Natural killer cell (primary cell): ENCODE measurements at regions of chr6 and their contacts with region 1.

Region 1: DNA sequence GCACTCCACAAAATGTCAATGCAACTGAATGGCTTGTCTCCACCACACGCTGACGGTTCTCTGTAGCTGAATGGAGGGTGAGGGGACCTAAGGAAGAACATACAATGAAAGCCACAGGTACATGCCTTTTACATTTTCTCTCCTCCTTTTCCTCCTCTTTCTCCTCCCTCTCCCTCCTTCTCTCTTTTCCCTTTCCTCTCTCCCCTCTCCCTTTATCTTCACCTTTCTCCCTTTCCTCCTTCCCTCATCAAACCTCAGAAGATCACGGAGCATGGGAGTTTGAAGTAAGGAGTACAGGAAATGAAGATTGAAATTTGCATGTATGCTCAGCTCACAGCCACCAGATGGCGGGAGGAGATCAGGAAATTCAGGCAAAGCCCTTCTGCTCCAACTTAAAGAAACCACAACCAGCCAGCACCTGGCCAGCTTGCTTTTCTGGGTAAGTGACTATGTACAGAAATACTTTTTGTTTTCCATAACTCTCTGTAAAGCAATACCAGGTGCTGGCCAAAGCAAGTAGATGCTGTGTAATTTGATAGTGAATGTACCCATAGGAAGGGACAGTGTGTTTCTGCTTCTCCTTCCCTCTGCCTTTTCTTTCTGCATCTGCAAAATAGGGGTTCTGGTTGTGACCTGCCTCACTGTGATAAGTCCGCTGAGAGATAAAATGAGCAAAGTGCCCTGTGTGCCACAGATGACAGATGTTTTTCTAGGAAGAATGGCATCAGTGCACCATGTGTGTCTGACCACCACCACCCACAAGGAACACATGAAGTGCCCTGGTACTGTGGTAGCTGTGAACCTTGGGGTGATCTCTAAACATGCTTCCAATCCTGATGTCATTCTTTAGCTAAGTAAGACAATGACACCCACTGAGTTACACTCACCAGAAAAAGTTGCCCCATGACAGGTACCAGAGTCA is 18.6 kb upstream of the FOXO3 start:
- DNase-seq: peak; percentile 56 to 90
- ATAC-seq: peak; percentile 77 to 81 (median 81)
- H3K4me3 ChIP-seq: no peak overlapping the region
- H3K4me3 Mint-ChIP-seq: no peak overlapping the region
- H3K27ac ChIP-seq: no peak overlapping the region
- H3K27ac Mint-ChIP-seq: peak overlapping the region in 1 of 2 donors; percentile 41
- H3K4me1 ChIP-seq: peaks cover 13% of the 10 kb centered on the region
- H3K4me1 Mint-ChIP-seq: peaks cover 28 to 41% of the 10 kb centered on the region in 2 donors
- H3K27me3 ChIP-seq: no peaks in the 10 kb centered on the region
- H3K27me3 Mint-ChIP-seq: no peaks in the 10 kb centered on the region
- CTCF ChIP-seq: peak; percentile 95

Region 2: DNA sequence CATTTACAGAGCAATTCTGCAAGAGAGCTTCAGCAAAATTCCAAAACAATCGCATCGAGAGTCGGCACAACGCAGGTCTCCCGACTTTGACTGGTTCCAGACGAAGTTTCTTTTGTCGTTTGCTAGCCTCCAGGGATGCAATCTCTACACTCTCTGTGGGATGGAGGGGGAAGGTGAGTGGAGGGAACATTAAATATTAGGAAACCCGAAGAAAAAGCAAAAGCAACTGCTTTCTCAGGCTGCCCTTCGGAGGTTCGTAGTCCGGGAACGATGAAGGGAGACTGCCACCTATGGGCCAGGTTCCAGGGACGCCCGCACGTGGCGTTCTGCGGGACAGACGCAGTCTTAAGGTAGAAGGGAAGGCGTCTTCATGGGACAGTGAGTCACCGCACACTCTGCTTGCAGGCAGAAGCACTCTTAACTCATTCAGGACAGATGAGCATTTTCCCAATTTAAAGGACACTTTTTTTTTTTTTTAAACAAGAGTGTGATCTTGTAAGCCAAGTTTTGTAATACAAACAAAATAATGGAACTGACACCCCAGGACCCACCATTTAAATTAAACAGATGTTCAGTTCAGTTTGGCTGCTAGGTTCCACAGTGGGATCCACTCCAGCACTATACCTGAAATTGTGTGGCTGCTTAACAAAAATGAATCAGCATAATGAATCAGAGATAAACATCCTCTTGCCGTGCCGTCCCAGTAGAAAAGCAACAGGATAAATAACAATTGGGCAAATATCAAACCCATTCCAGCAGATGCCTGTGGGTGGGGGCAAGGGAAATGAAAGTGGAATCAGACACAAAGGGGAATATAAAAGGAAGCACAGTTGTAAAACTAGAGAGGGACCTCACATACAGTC is 240.3 kb after region 1 on chr6:
- intact Hi-C with region 1: loop called (anchors 1 kb)
- DNase-seq: peak; percentile 59 to 87
- ATAC-seq: peak; percentile 93 to 99 (median 97)
- H3K4me3 ChIP-seq: peak overlapping the region; percentile 39
- H3K4me3 Mint-ChIP-seq: peak overlapping the region; percentile 86
- H3K27ac ChIP-seq: no peak overlapping the region
- H3K27ac Mint-ChIP-seq: peak overlapping the region in 1 of 2 donors; percentile 63
- H3K4me1 ChIP-seq: peaks cover 9% of the 10 kb centered on the region
- H3K4me1 Mint-ChIP-seq: peaks cover 12 to 17% of the 10 kb centered on the region in 2 donors
- H3K27me3 ChIP-seq: no peaks in the 10 kb centered on the region
- H3K27me3 Mint-ChIP-seq: peaks cover 8 to 10% of the 10 kb centered on the region in 2 donors
- CTCF ChIP-seq: peak; percentile 77

Region 3: DNA sequence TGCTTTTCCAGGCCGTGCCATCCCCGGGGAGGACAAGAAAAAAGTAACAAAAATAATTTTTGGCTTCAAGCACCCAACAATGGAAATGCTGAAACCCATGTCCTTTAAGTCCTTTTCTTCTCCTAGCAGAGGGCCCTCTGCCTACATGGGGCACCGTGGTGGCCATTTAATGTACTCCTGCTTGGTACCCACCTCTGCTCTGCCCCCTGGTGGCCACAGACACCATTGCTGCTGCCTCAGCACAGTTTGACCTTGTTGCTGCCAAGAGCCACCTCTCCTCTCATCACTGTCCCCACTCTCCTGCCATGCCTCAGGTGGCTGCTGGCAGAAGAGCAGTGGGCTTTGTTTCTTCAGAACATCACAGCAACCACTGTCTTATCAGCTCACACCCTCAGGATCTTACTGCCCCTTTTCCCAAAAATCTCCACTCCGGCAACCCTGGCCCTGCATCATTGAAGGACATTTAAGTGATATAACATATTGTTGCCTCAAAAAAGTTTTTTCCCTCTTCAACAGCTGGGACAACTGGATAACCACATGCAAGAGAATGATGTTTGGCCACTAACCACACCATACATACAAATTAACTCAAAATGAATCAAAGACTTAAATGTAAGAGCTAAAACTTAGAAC is 293.2 kb after region 1 on chr6:
- intact Hi-C with region 1: loop called (anchors 1 kb)
- DNase-seq: peak; percentile 80 to 92
- ATAC-seq: peak; percentile 77 to 92 (median 78)
- H3K4me3 ChIP-seq: no peak overlapping the region
- H3K4me3 Mint-ChIP-seq: peak overlapping the region; percentile 32
- H3K27ac ChIP-seq: no peak overlapping the region
- H3K27ac Mint-ChIP-seq: peak overlapping the region; percentile 2 to 31
- H3K4me1 ChIP-seq: peaks cover 29% of the 10 kb centered on the region
- H3K4me1 Mint-ChIP-seq: peaks cover 41 to 46% of the 10 kb centered on the region in 2 donors
- H3K27me3 ChIP-seq: no peaks in the 10 kb centered on the region
- H3K27me3 Mint-ChIP-seq: no peaks in the 10 kb centered on the region
- CTCF ChIP-seq: peak; percentile 94